Calu3 (cell line): ENCODE measurements at regions of chr12 and their contacts with region 1.

Region 1: DNA sequence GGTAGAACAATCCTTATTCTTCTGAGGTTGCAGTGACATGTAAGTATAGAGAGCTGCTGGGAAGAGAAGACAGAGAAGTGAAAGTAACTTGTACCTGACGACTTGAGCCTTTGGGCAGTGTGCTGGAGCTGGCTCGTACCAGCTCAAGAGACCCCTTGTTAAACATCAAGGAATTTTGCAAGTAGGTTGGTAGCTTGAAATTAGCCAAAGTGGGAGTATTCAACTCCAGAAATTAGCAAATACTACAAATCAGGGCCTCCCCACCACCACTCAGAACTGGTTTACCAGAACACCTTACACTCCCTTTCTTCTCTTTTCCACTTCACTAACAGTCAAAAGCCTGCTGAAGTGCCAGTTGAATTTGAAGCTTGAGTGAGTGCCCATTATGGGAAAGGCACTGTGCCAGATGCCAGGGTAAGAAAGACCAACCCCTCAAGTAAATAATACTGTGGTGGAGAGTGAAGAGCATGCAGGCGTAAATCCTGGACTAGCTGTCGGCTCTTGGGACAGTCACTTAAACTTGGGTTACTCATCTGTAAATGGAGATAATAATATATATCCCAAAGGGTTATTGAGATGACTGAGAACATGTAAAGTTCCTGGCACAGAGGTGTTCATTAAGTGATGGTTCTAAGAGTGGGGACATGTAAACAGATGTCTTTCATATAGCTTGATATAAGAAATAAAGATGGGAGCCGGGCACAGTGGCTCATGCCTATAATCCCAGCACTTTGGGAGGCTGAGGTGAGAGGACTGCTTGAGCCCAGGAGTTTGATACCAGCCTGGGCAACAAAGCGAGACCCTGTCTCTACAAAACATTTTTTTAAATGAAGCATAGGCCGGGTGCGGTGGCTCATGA is 27.0 kb upstream of the EID3 start:
- DNase-seq: no peak
- H3K4me3 Mint-ChIP-seq: peak overlapping the region; percentile 51
- H3K27ac Mint-ChIP-seq: peak overlapping the region; percentile 50
- H3K4me1 Mint-ChIP-seq: peaks cover 58% of the 10 kb centered on the region
- H3K27me3 Mint-ChIP-seq: no peaks in the 10 kb centered on the region
- CTCF ChIP-seq: no peak

Region 2: GRCh38 chr12:104286538-104287482 is 10.3 kb after region 1 on chr12:
- CTCF ChIA-PET with region 1: interaction called, 14 read pairs
- intact Hi-C with region 1: no loop called
- DNase-seq: peak; percentile 94
- H3K4me3 Mint-ChIP-seq: peak overlapping the region; percentile 99
- H3K27ac Mint-ChIP-seq: peak overlapping the region; percentile 99
- H3K4me1 Mint-ChIP-seq: peaks cover 40% of the 10 kb centered on the region
- H3K27me3 Mint-ChIP-seq: no peaks in the 10 kb centered on the region
- CTCF ChIP-seq: no peak